Upper lobe of right lung (tissue), 1 donor: ENCODE measurements at regions of chr19 and their contacts with region 1.

Region 1: GRCh38 chr19:10106100-10106936 is at the start of gene PPAN:
- DNase-seq: peak; percentile 98
- ATAC-seq: peak; percentile 97
- H3K4me3 ChIP-seq: peak within 1 kb of the TSS; percentile 94
- H3K27ac ChIP-seq: peak within 1 kb of the TSS; percentile 87
- H3K4me1 ChIP-seq: peaks cover 18% of the 10 kb centered on the region
- H3K27me3 ChIP-seq: no peaks in the 10 kb centered on the region
- CTCF ChIP-seq: no peak
- total RNA-seq, gene PPAN: 35.2 TPM

Region 2: DNA sequence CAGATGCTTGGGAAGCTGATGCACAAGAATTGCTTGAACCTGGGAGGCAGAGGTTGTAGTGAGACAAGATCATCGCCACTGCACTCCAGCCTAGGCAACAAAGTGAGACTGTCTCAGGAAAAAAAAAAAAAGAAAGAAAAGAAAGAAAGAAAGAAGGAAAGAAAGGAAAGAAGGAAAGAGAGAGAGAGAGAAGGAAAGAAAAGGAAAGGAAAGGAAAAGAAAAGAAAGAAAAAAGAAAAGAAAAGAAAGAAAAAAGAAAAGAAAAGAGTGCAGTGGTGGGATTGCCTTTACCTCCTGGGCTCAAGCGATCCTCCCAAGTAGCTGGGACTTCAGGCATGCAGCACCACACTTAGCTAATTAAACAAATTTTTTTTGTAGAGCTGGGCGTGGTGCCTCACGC is 182.9 kb before region 1 on chr19:
- intact Hi-C with region 1: loop called (anchors 10 kb)
- DNase-seq: no peak
- ATAC-seq: no peak
- H3K4me3 ChIP-seq: no peak overlapping the region
- H3K27ac ChIP-seq: no peak overlapping the region
- H3K4me1 ChIP-seq: no peaks in the 10 kb centered on the region
- H3K27me3 ChIP-seq: no peaks in the 10 kb centered on the region
- CTCF ChIP-seq: no peak

Region 3: GRCh38 chr19:10052602-10053360 is 53.5 kb before region 1 on chr19:
- intact Hi-C with region 1: no loop called
- DNase-seq: no peak
- ATAC-seq: no peak
- H3K4me3 ChIP-seq: no peak overlapping the region
- H3K27ac ChIP-seq: no peak overlapping the region
- H3K4me1 ChIP-seq: no peaks in the 10 kb centered on the region
- H3K27me3 ChIP-seq: no peaks in the 10 kb centered on the region
- CTCF ChIP-seq: no peak